Gastrocnemius medialis (tissue), 4 donors: ENCODE measurements at regions of chr6 and their contacts with region 1.

Region 1: DNA sequence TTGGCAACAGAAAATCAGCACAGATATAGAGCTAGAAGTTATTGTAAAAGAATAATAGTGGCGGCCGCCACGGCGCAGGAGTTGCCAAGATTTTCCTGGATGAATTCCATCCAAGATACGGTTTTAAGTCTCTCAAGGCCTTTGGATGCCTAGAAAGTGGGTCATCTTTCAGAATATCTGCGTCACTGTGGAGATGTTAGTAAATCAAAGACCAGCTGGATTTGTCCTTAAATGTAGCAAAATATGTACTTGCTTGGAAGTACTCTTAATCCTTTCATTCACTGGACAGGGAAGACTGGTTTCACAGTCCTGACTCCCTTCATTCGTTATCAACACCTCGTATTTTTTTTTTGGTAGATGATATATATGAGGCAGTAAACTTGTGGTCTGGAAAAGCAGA is 83.0 kb downstream of the SLC22A3 start:
- DNase-seq: peak; percentile 14 to 65
- ATAC-seq: peak; percentile 74 to 78
- H3K4me3 ChIP-seq: no peak overlapping the region
- H3K27ac ChIP-seq: peak overlapping the region; percentile 53 to 82 (median 70)
- H3K4me1 ChIP-seq: peaks cover 48 to 52% of the 10 kb centered on the region in 2 donors
- H3K27me3 ChIP-seq: no peaks in the 10 kb centered on the region
- CTCF ChIP-seq: no peak
- POLR2A ChIP-seq: no peak

Region 2: DNA sequence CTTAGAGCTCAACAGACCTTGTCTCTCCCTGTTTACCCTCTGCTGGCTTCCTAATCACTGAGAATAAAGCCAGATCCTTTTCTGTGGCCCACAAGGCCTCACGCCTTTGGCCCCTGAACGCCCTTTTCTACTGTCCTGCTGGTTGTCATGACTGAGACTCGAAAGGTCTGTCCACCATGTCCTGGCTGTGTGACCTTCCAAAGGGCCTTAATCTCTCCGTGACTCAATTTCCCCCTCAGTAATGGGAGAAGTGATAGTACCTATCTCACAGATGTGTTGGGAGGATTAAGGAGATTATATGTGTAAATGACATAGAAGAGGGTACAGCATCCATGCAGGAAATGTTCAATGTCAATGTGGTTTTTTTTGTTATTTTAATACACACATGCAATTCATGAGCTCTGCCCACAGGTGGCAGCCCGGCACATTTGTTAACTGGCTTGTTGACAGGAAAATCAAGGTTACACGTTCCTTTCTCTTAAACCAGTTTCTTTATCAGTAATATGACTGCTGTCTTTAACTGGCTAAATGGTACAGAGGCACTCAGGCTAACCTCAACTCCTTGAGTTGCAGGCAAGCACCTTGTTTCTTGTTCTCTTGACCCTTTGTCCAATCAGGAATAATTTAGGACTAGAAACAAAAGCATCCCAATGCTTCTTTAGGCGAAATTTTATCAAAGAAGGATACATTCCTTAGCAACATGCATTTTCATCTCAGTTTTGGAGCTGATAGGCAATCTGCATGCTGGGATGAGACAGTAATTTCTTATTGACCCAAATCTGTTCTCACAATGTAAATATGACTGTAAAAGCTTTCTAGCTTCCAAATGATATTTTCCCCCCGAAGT is 293.0 kb before region 1 on chr6:
- in situ Hi-C with region 1: loop called in 1 of 4 experiments (anchors 25 kb)
- intact Hi-C with region 1: no loop called
- DNase-seq: no peak
- ATAC-seq: peak; percentile 43 to 65
- H3K4me3 ChIP-seq: no peak overlapping the region
- H3K27ac ChIP-seq: peak overlapping the region in 1 of 4 donors; percentile 21
- H3K4me1 ChIP-seq: peaks cover 0 to 19% of the 10 kb centered on the region in 2 donors
- H3K27me3 ChIP-seq: no peaks in the 10 kb centered on the region
- CTCF ChIP-seq: peak; percentile 60 to 74 (median 71)
- POLR2A ChIP-seq: no peak

Region 3: GRCh38 chr6:160272707-160273106 is 158.5 kb before region 1 on chr6:
- in situ Hi-C with region 1: no loop called
- intact Hi-C with region 1: loop called (anchors 1 kb)
- DNase-seq: no peak
- ATAC-seq: no peak
- H3K4me3 ChIP-seq: no peak overlapping the region
- H3K27ac ChIP-seq: peak overlapping the region in 3 of 4 donors; percentile 68 to 82 (median 78)
- H3K4me1 ChIP-seq: peaks cover 30 to 31% of the 10 kb centered on the region in 2 donors
- H3K27me3 ChIP-seq: no peaks in the 10 kb centered on the region
- CTCF ChIP-seq: no peak
- POLR2A ChIP-seq: no peak

Region 4: DNA sequence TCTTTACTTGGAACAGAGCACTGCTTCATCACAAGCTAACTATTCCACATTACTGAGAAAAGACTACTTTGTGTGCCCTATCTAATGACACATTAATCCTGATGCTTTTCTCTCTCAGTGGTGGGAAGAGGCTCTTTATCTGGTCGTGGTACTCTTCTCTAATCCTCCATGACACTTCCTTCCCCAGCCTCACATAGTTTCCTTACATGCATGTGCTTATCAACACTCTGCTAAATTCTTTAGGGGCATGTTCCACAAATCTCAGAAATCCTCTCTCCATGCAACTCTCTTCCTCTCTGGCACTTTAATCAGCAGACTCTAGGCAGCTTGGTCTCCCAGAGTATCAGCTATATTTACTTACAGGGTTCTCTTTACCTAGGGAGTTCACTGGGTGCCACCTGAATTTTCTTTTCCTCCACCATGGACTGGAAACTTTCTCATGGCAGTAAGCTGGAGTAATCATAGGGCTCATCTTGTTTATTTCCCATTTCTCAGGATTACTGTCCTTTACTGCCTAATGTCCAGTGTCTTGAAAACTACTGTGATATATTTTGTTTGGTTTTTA is 145.6 kb before region 1 on chr6:
- in situ Hi-C with region 1: no loop called
- intact Hi-C with region 1: no loop called
- DNase-seq: no peak
- ATAC-seq: no peak
- H3K4me3 ChIP-seq: no peak overlapping the region
- H3K27ac ChIP-seq: no peak overlapping the region
- H3K4me1 ChIP-seq: no peaks in the 10 kb centered on the region
- H3K27me3 ChIP-seq: no peaks in the 10 kb centered on the region
- CTCF ChIP-seq: no peak
- POLR2A ChIP-seq: no peak

Region 5: DNA sequence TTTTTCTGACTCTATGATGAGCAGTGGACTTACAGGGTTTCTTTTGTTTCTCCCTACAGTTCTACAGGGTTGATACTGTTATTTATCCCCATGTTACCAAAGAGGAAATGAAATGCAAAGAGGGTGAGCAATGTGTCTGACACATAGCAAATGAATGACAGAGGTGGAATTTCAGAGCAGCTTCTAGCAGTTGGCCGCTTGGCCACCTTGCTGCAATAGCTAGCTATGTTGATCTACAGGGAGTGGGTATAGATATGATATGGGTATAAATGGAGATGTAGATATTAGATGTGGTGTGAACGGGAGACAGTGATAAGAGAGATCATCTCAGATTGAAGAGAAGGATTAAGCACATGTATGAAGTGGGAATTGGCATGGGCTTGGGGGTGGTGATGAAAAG is 93.9 kb before region 1 on chr6:
- in situ Hi-C with region 1: no loop called
- intact Hi-C with region 1: loop called (anchors 5 kb)
- DNase-seq: peak in 1 of 2 donors; percentile 20
- ATAC-seq: peak; percentile 43 to 86
- H3K4me3 ChIP-seq: no peak overlapping the region
- H3K27ac ChIP-seq: peak overlapping the region in 1 of 4 donors; percentile 56
- H3K4me1 ChIP-seq: peaks cover 0 to under 1% of the 10 kb centered on the region in 2 donors
- H3K27me3 ChIP-seq: no peaks in the 10 kb centered on the region
- CTCF ChIP-seq: no peak
- POLR2A ChIP-seq: no peak

Region 6: GRCh38 chr6:160348142-160349019 is 82.8 kb before region 1 on chr6 and contains the start of gene SLC22A3:
- in situ Hi-C with region 1: no loop called
- intact Hi-C with region 1: loop called (anchors 5 kb)
- DNase-seq: peak in 1 of 2 donors; percentile 55
- ATAC-seq: peak; percentile 71 to 77
- H3K4me3 ChIP-seq: peak within 1 kb of the TSS; percentile 77 to 96 (median 84)
- H3K27ac ChIP-seq: peak within 1 kb of the TSS; percentile 84 to 95 (median 89)
- H3K4me1 ChIP-seq: peaks cover 4% of the 10 kb centered on the region in 2 donors
- H3K27me3 ChIP-seq: peaks cover 0 to 9% (median 3%) of the 10 kb centered on the region in 3 donors
- CTCF ChIP-seq: peak in 3 of 5 experiments; percentile 24 to 42 (median 40)
- POLR2A ChIP-seq: peak; percentile 71 to 73
- total RNA-seq, gene SLC22A3: 49.5 to 75.4 (median 58.2) TPM

Region 7: DNA sequence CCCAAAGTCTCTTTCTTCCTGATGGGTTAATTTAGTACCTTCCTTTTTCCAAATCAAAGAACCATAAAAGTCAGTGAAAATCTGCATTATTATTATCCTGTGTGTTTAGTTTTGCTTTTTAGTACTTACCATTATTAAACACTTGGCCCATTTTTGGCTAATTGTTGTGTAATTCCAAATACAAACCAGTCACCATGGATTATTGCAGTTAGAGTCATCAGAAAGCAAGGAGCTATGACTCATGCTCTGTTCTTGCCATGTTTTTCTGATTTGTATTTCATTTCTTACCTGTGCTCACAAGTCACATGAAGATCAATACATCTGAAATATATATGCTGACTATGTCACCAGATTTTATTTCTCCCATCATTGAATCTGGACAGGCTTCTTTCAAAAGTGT is 51.8 kb before region 1 on chr6:
- in situ Hi-C with region 1: no loop called
- intact Hi-C with region 1: no loop called
- DNase-seq: no peak
- ATAC-seq: peak in 1 of 2 donors; percentile 44
- H3K4me3 ChIP-seq: no peak overlapping the region
- H3K27ac ChIP-seq: peak overlapping the region; percentile 5 to 82 (median 52)
- H3K4me1 ChIP-seq: peaks cover 19 to 32% of the 10 kb centered on the region in 2 donors
- H3K27me3 ChIP-seq: no peaks in the 10 kb centered on the region
- CTCF ChIP-seq: no peak
- POLR2A ChIP-seq: no peak

Region 8: GRCh38 chr6:160659562-160659961 is 228.3 kb after region 1 on chr6:
- in situ Hi-C with region 1: no loop called
- intact Hi-C with region 1: no loop called
- DNase-seq: no peak
- ATAC-seq: no peak
- H3K4me3 ChIP-seq: no peak overlapping the region
- H3K27ac ChIP-seq: no peak overlapping the region
- H3K4me1 ChIP-seq: no peaks in the 10 kb centered on the region
- H3K27me3 ChIP-seq: no peaks in the 10 kb centered on the region
- CTCF ChIP-seq: no peak
- POLR2A ChIP-seq: no peak